Ovary (tissue), 10 donors: ENCODE measurements at regions of chr6 and their contacts with region 1.

Region 1: GRCh38 chr6:144284783-144285547 is at the start of gene UTRN:
- DNase-seq: peak; percentile 75 to 86 (median 82)
- H3K4me3 ChIP-seq: peak within 1 kb of the TSS; percentile 73
- H3K27ac ChIP-seq: peak within 1 kb of the TSS; percentile 85 to 96
- H3K4me1 ChIP-seq: peaks cover 3% of the 10 kb centered on the region
- H3K27me3 ChIP-seq: no peaks in the 10 kb centered on the region
- CTCF ChIP-seq: no peak
- EP300 ChIP-seq: no peak
- POLR2A ChIP-seq: no peak
- total RNA-seq, gene UTRN: 105 to 155 (median 132) TPM

Region 2: GRCh38 chr6:144215932-144216667 is 68.9 kb before region 1 on chr6:
- intact Hi-C with region 1: loop called in 3 of 4 experiments (anchors 2 to 10 kb)
- DNase-seq: peak; percentile 92 to 97 (median 95)
- H3K4me3 ChIP-seq: peak overlapping the region; percentile 56
- H3K27ac ChIP-seq: peak overlapping the region; percentile 94 to 97
- H3K4me1 ChIP-seq: peaks cover 5% of the 10 kb centered on the region
- H3K27me3 ChIP-seq: no peaks in the 10 kb centered on the region
- CTCF ChIP-seq: peak; percentile 66 to 89 (median 82)
- EP300 ChIP-seq: no peak
- POLR2A ChIP-seq: no peak

Region 3: DNA sequence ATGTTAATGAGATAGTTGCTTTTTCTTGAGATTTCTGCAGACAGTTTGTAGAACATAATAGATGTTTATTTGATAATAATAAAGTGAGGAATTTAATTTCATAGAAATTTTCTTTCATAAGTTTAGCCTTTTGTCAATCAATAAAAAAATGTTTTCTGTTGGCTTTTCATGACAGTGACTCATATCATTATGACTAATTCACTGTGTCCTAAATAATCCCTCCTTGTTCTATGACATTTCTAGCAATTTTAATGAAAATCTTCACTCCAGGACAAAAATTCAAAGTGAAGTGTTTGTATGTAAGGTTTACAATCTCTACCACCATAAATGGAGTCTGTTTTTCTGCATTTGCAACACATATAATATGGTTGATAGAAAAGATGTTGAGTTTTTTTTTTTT is 110.0 kb after region 1 on chr6:
- intact Hi-C with region 1: loop called in 1 of 4 experiments (anchors 10 kb)
- DNase-seq: no peak
- H3K4me3 ChIP-seq: no peak overlapping the region
- H3K27ac ChIP-seq: no peak overlapping the region
- H3K4me1 ChIP-seq: peaks cover 2% of the 10 kb centered on the region
- H3K27me3 ChIP-seq: no peaks in the 10 kb centered on the region
- CTCF ChIP-seq: no peak
- EP300 ChIP-seq: no peak
- POLR2A ChIP-seq: no peak

Region 4: GRCh38 chr6:144482142-144482541 is 197.2 kb after region 1 on chr6:
- intact Hi-C with region 1: loop called in 1 of 4 experiments (anchors 10 kb)
- DNase-seq: peak; percentile 75 to 86 (median 82)
- H3K4me3 ChIP-seq: no peak overlapping the region
- H3K27ac ChIP-seq: no peak overlapping the region
- H3K4me1 ChIP-seq: peaks cover 7% of the 10 kb centered on the region
- H3K27me3 ChIP-seq: no peaks in the 10 kb centered on the region
- CTCF ChIP-seq: peak in 2 of 3 donors; percentile 21 to 43
- EP300 ChIP-seq: no peak
- POLR2A ChIP-seq: no peak

Region 5: GRCh38 chr6:145734486-145735355 is 1449.8 kb after region 1 on chr6:
- intact Hi-C with region 1: loop called in 1 of 4 experiments (anchors 10 kb)
- DNase-seq: peak; percentile 85 to 92 (median 89)
- H3K4me3 ChIP-seq: peak overlapping the region; percentile 57
- H3K27ac ChIP-seq: peak overlapping the region; percentile 96 to 99
- H3K4me1 ChIP-seq: peaks cover 2% of the 10 kb centered on the region
- H3K27me3 ChIP-seq: no peaks in the 10 kb centered on the region
- CTCF ChIP-seq: no peak
- EP300 ChIP-seq: peak; percentile 5
- POLR2A ChIP-seq: peak; percentile 57